ENCODE measurements at regions of chr3 and their contacts with region 1.

Region 1: DNA sequence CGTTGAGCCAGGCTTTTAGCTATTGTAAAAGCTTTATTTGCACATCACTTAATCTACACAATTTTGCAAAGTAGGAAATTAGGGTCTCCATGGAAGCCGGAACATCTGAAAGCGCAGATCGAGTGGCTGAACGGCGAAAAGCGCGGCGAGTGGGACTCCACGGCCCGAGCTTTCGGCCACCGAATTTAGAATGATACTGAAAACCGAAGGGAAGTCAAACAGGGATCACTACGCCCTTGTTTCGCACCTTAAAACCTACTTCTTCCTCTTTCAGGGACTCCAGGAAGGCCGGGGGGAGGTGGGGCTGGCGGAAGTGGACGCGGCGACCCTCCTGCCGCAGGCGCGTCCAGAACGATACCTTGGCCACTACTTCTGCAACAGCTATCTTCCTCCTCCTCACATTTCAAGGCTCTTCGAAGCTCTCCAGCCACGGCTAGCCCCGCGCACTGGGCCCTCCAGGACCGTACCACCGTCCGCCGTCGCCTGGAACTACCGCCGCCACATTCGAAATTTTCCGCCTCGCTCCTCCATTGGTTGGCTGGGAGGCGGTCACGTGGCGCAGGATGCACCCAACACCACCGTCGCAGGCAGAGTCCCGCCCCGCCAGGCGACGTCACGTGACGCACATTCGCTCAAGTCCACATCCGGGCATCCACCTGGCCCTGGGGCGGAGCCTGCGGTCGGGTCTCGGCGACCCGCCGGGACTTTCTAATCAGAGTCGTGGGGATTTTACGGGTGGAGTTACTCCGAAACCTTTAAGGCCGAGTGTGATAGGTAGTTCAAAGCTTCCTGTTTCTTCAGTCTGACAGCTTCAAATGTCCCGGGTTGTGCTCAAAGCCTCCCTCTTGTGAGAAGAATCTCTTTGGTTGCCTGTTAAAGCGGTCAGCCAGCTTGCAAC is at the start of gene SGO1:
- DNase-seq: peak; percentile 100
- H3K4me3 Mint-ChIP-seq: no peak within 1 kb of the TSS
- H3K27ac Mint-ChIP-seq: no peak within 1 kb of the TSS
- H3K4me1 Mint-ChIP-seq: no peaks in the 10 kb centered on the region
- H3K27me3 Mint-ChIP-seq: no peaks in the 10 kb centered on the region
- total RNA-seq, gene SGO1: 17.8 and 18.3 TPM in 2 replicates

Region 2: DNA sequence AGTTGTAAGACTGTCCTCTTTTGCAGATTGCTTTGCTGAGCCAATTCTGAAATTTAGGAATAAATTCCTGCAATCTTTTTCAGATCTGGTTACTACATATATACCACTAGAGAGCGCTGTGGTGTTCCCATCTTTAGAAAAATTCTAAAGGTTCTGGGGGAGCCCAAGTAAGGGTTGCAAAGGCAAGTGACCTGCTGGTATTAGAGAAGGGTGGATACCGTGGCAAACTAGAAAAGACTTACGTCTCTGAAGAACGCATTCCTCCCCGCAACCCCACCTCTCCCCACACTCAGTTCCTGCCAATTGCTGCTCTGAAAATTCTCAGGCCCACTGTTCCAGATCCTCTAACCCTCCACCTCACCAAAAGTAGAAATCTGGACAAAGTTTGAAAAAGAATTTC is 300.5 kb before region 1 on chr3:
- intact Hi-C with region 1: loop called (anchors 1 kb)
- DNase-seq: no peak
- H3K4me3 Mint-ChIP-seq: no peak overlapping the region
- H3K27ac Mint-ChIP-seq: no peak overlapping the region
- H3K4me1 Mint-ChIP-seq: peaks cover 11% of the 10 kb centered on the region
- H3K27me3 Mint-ChIP-seq: peaks cover 5% of the 10 kb centered on the region

Region 3: DNA sequence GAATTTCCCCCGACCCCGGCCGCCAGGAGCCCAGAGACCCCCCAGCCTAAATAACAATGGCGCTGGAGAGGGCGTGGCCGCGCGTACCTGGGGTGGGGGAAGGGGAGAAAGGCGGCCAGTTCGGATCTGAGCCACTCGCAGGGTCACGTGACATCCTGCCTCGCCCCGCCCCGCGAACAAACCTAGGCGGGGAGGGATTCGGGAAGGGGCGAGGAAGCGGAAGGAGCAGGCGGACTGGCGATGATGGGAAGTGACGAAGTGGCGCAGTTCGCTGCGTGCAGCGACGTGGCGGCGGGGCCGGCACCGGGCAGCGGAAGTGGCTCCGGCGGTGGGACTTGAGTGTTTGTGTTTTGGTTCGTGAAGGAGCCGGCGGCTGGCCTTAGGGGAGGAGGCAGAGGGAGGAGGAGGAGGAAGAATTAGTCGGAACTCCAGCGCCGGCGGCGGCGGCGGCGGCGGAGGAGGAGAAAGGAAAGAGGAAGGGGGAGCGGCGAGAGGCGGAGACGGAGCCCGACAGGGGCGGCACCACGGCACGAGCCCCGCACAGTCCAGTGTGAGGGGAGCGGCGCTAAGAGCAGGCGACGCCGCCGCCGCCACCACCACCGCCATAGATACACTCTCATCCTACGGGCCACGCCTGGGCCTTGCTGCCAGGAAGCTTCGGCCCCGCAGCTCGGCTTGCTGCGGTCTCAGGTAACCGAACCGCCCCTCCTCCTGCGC is 239.0 kb before region 1 on chr3 and contains the start of gene RAB5A:
- intact Hi-C with region 1: loop called (anchors 1 kb)
- DNase-seq: peak; percentile 96
- H3K4me3 Mint-ChIP-seq: peak within 1 kb of the TSS; percentile 92
- H3K27ac Mint-ChIP-seq: peak within 1 kb of the TSS; percentile 97
- H3K4me1 Mint-ChIP-seq: peaks cover 47% of the 10 kb centered on the region
- H3K27me3 Mint-ChIP-seq: no peaks in the 10 kb centered on the region
- total RNA-seq, gene RAB5A: 62.2 and 64.0 TPM in 2 replicates

Region 4: DNA sequence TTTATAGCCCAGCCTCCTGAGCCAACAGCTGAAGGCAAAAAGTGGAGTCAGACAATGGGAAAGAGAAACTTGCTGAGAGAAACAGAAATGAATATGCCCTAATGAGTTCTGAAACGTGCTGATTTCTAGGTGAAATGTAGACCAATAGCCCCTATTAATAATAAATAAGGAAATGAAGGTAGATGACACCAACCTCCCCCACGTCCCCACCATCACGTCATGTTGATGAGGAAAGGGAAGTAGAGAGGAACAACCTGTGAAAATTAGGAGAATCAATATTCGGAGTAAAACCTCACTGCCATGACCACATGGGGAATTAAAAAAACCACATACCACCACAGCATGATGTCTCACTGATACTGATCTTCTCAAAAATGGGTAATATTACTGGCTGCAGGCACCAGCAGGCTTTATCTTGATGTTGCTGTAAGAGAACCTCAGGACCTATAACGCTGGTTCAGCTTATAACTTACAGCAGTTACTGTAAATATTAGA is 81.7 kb before region 1 on chr3:
- intact Hi-C with region 1: loop called (anchors 1 kb)
- DNase-seq: peak; percentile 52
- H3K4me3 Mint-ChIP-seq: peak overlapping the region; percentile 52
- H3K27ac Mint-ChIP-seq: peak overlapping the region; percentile 93
- H3K4me1 Mint-ChIP-seq: peaks cover 79% of the 10 kb centered on the region
- H3K27me3 Mint-ChIP-seq: no peaks in the 10 kb centered on the region

Region 5: DNA sequence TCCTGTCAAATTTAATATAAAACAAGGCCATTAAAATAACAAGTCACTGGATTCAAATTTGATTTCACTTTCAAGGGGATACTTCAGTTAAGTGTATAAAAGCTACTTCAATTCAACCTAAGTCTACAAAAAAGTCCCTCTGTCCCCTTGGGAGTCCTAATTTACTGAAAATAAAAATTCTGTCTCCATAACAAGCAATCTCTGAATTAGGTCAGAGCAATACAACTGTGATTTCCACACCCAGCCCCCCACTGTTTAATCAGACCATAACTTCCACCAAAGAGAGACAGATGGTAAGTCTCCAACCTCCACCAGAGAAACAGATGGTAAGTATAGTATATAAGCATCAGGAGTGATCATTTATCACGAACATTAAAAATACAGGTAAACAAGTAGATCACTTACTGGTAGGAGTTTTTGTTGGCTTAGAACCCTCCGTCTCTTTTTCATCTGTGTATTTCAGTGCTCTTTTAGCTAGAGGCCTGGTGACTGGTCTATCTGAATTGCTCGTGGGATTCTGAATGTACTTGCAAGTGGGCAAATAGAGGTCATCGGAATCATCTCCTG is 12.0 kb before region 1 on chr3:
- intact Hi-C with region 1: no loop called
- DNase-seq: no peak
- H3K4me3 Mint-ChIP-seq: no peak overlapping the region
- H3K27ac Mint-ChIP-seq: no peak overlapping the region
- H3K4me1 Mint-ChIP-seq: peaks cover 26% of the 10 kb centered on the region
- H3K27me3 Mint-ChIP-seq: no peaks in the 10 kb centered on the region